Activated naive CD4-positive, alpha-beta T cell treated with anti-CD3 and anti-CD28 coated beads for 36 hours (primary cell): ENCODE measurements at regions of chr14 and their contacts with region 1.

Region 1: GRCh38 chr14:61894452-61895077 is 132.3 kb downstream of the SNAPC1 start:
- DNase-seq: peak; percentile 82
- H3K4me3 Mint-ChIP-seq: no peak overlapping the region
- H3K27ac Mint-ChIP-seq: no peak overlapping the region
- H3K4me1 Mint-ChIP-seq: peaks cover 14% of the 10 kb centered on the region
- H3K27me3 Mint-ChIP-seq: no peaks in the 10 kb centered on the region

Region 2: GRCh38 chr14:61461808-61462275 is 432.7 kb before region 1 on chr14:
- CTCF ChIA-PET with region 1: interaction called, 3 read pairs
- intact Hi-C with region 1: loop called (anchors 1 kb)
- DNase-seq: peak; percentile 60
- H3K4me3 Mint-ChIP-seq: peak overlapping the region; percentile 27
- H3K27ac Mint-ChIP-seq: peak overlapping the region; percentile 93
- H3K4me1 Mint-ChIP-seq: peaks cover 71% of the 10 kb centered on the region
- H3K27me3 Mint-ChIP-seq: no peaks in the 10 kb centered on the region

Region 3: GRCh38 chr14:61860294-61860918 is 34.2 kb before region 1 on chr14:
- CTCF ChIA-PET with region 1: interaction called, 9 read pairs
- intact Hi-C with region 1: loop called (anchors 2 kb)
- DNase-seq: peak; percentile 91
- H3K4me3 Mint-ChIP-seq: no peak overlapping the region
- H3K27ac Mint-ChIP-seq: no peak overlapping the region
- H3K4me1 Mint-ChIP-seq: no peaks in the 10 kb centered on the region
- H3K27me3 Mint-ChIP-seq: peaks cover 2% of the 10 kb centered on the region

Region 4: DNA sequence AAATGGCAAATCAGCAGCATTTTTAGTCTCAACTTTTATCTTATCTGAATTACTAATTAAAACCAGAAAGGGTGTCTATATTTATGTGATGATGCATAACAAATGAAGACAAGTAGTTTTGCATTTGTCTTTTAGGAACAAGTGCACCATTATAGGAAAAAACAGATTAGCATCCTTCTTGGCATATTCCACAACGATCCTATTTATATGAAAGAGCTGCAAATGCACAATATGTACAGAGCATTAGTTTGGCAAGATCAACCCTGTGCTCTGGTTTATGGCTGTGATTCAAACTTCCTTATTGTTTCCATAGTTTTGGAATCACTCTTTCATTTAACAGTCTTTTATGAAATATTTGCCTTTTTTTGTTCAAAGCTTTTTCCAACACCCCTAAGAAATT is 663.9 kb after region 1 on chr14:
- CTCF ChIA-PET with region 1: no interaction called
- intact Hi-C with region 1: no loop called
- DNase-seq: no peak
- H3K4me3 Mint-ChIP-seq: no peak overlapping the region
- H3K27ac Mint-ChIP-seq: no peak overlapping the region
- H3K4me1 Mint-ChIP-seq: no peaks in the 10 kb centered on the region
- H3K27me3 Mint-ChIP-seq: no peaks in the 10 kb centered on the region